Common myeloid progenitor, CD34-positive (primary cell): ENCODE measurements at regions of chr1 and their contacts with region 1.

Region 1: DNA sequence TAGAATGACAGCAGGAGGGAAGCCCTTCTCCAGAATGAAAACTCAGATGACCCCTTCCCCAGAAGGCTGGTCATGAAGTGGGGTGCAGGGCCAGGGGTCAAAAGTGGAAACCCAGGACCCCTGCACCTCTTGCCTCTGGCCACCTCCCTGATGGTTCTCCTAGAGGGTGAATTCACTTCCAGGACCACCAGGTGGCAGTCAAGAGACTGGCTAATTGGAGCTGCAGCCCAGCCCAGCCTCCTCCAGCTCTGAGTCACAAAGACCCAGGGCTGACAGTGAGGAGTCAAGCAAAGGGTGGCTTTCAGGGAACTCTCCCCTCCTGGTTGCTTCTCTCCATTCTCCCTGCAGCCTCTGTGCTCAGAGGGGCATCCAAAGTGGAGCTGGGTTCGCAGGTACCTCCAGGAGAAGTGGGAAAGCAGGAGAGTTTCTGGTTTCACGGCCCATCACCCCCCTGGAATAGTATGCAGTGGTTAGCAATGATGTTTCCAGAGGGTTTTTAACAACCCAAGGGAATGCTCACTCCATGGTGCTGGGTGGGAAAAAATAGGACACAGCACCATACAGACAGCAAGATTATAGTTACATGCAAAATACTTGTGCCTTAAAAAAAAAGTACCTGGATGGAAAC is 6.1 kb upstream of the EPHB2 start:
- DNase-seq: peak; percentile 75 to 90 (median 87)
- H3K4me3 ChIP-seq: no peak overlapping the region
- H3K27ac ChIP-seq: no peak overlapping the region
- H3K4me1 ChIP-seq: peaks cover 0 to 18% (median 9%) of the 10 kb centered on the region in 4 experiments
- H3K27me3 ChIP-seq: peaks cover 0 to 9% (median 7%) of the 10 kb centered on the region in 5 experiments

Region 2: DNA sequence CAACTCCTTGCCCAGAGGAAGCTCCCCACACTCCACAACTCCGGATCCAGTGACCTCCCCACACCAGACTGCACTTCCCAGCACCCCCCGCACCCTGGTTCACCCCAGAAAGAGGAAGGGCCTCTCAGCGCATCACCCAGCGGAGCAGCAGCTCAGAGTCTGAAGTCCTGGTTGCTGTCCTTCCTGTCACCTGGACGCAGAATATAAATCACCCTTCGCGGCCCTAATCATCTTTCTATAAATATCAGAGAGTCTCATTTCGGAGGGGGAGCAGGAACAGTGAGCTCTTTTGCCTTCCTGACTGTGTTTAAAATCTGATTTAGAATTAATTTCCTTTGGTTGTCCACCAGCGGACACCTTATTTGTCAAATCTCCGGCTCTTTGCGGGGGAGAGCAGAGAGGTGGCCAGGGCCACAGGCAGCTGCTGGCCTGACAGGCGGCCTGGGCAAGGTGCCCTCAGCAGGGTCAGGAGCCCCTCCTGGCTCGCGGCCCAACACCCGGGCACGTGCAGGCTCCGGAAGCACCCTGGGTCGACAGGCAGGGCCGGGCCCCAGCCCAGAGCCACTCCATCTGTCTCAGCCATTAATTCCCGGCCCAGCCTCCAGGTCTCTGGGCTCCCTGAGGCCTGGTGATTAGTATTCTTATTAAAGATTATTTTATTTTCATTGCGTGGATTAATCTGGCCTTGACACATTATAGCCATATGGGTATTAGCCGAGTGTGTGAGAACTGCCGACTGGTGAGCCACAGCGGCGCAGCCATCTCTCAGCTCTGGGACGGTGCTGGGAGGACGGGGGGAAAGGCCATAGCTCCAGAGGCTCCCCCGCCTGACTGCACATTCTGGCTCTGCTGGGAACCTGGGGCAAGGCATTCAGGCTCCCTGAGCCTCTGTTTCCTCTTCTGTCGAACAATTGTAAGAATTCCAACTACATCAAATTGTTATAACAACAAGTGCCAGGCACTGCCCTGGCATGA is 121.6 kb before region 1 on chr1:
- CTCF ChIA-PET with region 1: no interaction called
- POLR2A ChIA-PET with region 1: no interaction called
- DNase-seq: no peak
- H3K4me3 ChIP-seq: no peak overlapping the region
- H3K27ac ChIP-seq: no peak overlapping the region
- H3K4me1 ChIP-seq: no peaks in the 10 kb centered on the region
- H3K27me3 ChIP-seq: peaks cover 0 to 3% (median 2%) of the 10 kb centered on the region in 5 experiments

Region 3: GRCh38 chr1:22717037-22717760 is 12.6 kb after region 1 on chr1:
- CTCF ChIA-PET with region 1: interaction called, 12 read pairs
- POLR2A ChIA-PET with region 1: no interaction called
- DNase-seq: no peak
- H3K4me3 ChIP-seq: no peak overlapping the region
- H3K27ac ChIP-seq: no peak overlapping the region
- H3K4me1 ChIP-seq: no peaks in the 10 kb centered on the region
- H3K27me3 ChIP-seq: peaks cover 0 to 48% (median 24%) of the 10 kb centered on the region in 5 experiments

Region 4: GRCh38 chr1:22794647-22795365 is 90.3 kb after region 1 on chr1:
- CTCF ChIA-PET with region 1: no interaction called
- POLR2A ChIA-PET with region 1: no interaction called
- DNase-seq: no peak
- H3K4me3 ChIP-seq: no peak overlapping the region
- H3K27ac ChIP-seq: no peak overlapping the region
- H3K4me1 ChIP-seq: no peaks in the 10 kb centered on the region
- H3K27me3 ChIP-seq: peaks cover 0 to 10% (median 0%) of the 10 kb centered on the region in 5 experiments

Region 5: GRCh38 chr1:22861764-22862440 is 157.3 kb after region 1 on chr1:
- CTCF ChIA-PET with region 1: interaction called, 11 read pairs
- POLR2A ChIA-PET with region 1: no interaction called
- DNase-seq: peak in 2 of 3 donors; percentile 49 to 51
- H3K4me3 ChIP-seq: no peak overlapping the region
- H3K27ac ChIP-seq: no peak overlapping the region
- H3K4me1 ChIP-seq: peaks cover 0 to 8% (median 6%) of the 10 kb centered on the region in 4 experiments
- H3K27me3 ChIP-seq: no peaks in the 10 kb centered on the region

Region 6: GRCh38 chr1:22870201-22870871 is 165.8 kb after region 1 on chr1:
- CTCF ChIA-PET with region 1: interaction called, 11 read pairs
- POLR2A ChIA-PET with region 1: no interaction called
- DNase-seq: no peak
- H3K4me3 ChIP-seq: no peak overlapping the region
- H3K27ac ChIP-seq: no peak overlapping the region
- H3K4me1 ChIP-seq: peaks cover 0 to 8% (median 6%) of the 10 kb centered on the region in 4 experiments
- H3K27me3 ChIP-seq: peaks cover 0 to 12% (median 0%) of the 10 kb centered on the region in 5 experiments

Region 7: DNA sequence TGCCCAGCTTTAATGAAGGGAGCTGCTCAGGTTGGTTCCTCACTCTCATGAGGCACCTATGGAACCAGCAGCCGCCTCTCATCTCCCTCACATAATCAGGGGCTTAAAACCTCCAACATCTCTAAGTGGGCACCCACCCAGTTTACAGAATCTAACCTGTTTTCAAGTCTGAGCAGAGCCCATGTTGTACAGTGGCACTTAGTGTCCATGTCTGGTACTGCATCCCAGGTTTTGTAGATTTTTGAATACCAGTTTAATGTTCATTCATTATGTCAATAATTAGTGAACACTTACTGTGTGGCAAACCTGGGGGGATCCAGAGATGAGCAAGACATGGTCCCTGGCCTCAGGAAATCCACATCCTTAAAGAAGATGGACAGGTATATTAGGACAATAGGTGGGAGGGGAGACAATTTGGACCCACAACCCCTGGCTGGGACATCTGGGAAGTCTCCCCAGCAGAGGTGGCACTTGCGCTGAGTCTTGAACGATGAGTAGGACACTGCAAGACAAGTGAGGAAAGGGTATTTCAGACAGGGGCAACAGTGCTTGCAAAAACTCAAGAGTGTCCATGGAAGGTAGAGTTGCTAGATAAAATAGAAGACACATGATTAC is 184.8 kb after region 1 on chr1:
- CTCF ChIA-PET with region 1: interaction called, 36 read pairs
- POLR2A ChIA-PET with region 1: no interaction called
- DNase-seq: peak; percentile 31 to 62 (median 50)
- H3K4me3 ChIP-seq: no peak overlapping the region
- H3K27ac ChIP-seq: no peak overlapping the region
- H3K4me1 ChIP-seq: peaks cover 0 to 9% (median 5%) of the 10 kb centered on the region in 4 experiments
- H3K27me3 ChIP-seq: peaks cover 0 to 5% (median 0%) of the 10 kb centered on the region in 5 experiments

Region 8: GRCh38 chr1:22930235-22930912 is 225.8 kb after region 1 on chr1:
- CTCF ChIA-PET with region 1: interaction called, 11 read pairs
- POLR2A ChIA-PET with region 1: no interaction called
- DNase-seq: peak; percentile 34 to 52 (median 41)
- H3K4me3 ChIP-seq: no peak overlapping the region
- H3K27ac ChIP-seq: no peak overlapping the region
- H3K4me1 ChIP-seq: no peaks in the 10 kb centered on the region
- H3K27me3 ChIP-seq: peaks cover 0 to 12% (median 0%) of the 10 kb centered on the region in 5 experiments